Psoas muscle (tissue), 8 donors: ENCODE measurements at regions of chr17 and their contacts with region 1.

Region 1: DNA sequence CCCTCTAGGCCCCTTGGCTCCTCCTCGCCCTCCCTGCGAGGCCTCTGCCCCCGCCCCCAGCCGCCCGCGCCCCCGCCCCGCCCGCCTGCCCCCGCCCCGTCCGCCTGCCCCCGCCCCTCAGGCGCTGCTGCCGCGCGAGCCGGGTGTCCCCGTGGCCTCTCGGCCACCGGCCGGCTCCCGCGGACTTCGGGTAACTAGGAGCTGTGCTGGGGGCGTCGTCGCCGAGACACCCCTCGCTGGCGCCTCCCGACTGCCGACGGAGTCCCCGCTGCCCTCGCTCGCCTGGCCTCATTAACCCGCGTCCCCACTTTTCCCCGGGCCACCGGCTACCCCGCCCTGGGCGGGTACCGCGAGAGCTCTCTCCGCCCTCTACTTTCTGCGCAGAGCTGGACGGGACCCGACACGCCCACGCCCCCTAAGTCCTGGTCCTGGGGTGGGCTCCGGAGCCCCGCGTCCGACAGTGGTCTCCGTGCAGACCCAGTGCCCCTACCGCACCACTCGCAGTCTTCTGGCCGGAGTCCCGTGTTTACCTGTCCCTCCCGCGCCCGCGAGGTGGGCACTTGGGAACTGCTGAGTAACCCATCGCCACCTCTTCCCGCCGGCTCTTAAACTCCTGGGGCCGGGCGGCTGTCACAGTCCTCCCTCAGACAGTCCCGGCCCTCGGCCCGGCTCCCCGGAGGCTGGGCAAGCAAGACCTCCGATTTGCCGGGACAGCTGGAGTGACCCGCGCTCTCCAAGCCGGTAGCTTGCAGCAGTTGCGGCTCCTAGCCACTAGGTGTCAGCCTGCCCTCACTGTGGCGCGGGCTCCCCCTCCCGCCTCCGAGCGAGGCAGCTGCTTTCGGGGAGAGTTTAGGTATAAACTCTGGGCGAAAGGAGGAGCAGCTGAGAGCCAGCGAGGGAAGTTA is at the start of gene TLCD1:
- DNase-seq: peak; percentile 92 to 95
- ATAC-seq: peak; percentile 70 to 79 (median 75)
- H3K4me3 ChIP-seq: peak within 1 kb of the TSS; percentile 80
- H3K27ac ChIP-seq: peak within 1 kb of the TSS; percentile 59
- H3K4me1 ChIP-seq: peaks cover 32% of the 10 kb centered on the region
- H3K27me3 ChIP-seq: no peaks in the 10 kb centered on the region
- CTCF ChIP-seq: peak; percentile 99
- total RNA-seq, gene TLCD1: 0.77 to 1.9 (median 0.88) TPM in 3 of 4 donors, not detected in the other

Region 2: DNA sequence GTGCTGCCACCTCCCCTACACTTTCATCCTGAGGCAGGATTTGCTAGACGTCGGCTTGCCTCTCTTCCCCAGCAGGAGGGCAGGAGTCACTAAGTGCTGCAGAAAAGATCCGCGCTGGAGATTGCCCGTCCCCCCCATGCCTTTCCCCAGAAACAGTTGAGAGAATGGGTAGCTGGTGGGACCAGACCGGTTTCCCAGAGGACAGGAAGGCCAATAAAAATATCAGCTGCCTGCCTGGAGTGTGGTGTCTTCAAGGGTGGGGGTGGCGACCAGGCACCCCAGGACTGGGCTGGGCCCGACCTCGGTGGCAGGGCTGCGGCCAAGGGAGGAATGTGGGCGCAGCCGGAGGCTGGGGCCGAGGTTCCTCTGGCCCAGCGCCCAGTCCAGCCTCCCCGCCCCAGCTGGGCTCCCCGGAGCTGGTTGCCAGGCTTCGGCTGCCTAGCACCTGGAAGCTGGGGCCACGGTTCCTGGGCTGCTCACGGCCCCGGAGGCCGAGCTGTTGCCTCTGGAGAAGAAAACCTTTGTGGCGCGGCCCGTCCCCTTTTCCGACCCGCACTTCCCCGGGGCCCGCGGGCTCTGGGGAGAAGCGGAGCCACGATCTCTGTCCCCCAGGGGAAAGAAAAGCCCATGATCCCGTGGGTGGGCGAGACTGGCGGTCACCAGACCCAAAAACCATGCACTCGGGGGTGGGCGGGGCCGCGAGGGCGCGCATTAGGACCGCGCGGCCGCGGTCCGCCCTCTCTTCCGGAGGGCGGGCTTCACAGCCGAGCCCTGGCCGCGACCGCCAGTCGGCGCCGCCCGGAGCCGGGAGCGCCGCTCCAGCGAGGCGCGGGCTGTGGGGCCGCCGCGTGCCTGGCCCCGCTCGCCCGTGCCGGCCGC is 17.0 kb after region 1 on chr17 and contains the start of gene TRAF4:
- intact Hi-C with region 1: loop called in 1 of 2 experiments (anchors 2 kb)
- DNase-seq: peak; percentile 82 to 84
- ATAC-seq: peak; percentile 86 to 91 (median 88)
- H3K4me3 ChIP-seq: peak within 1 kb of the TSS; percentile 79
- H3K27ac ChIP-seq: peak within 1 kb of the TSS; percentile 78
- H3K4me1 ChIP-seq: peaks cover 28% of the 10 kb centered on the region
- H3K27me3 ChIP-seq: no peaks in the 10 kb centered on the region
- CTCF ChIP-seq: peak; percentile 31
- total RNA-seq, gene TRAF4: 1.4 to 6.7 (median 2.3) TPM

Region 3: GRCh38 chr17:28750178-28751047 is 23.9 kb after region 1 on chr17:
- intact Hi-C with region 1: loop called (anchors 1 to 2 kb)
- DNase-seq: peak; percentile 92 to 95
- ATAC-seq: peak; percentile 83 to 91 (median 88)
- H3K4me3 ChIP-seq: no peak overlapping the region
- H3K27ac ChIP-seq: no peak overlapping the region
- H3K4me1 ChIP-seq: peaks cover 12% of the 10 kb centered on the region
- H3K27me3 ChIP-seq: no peaks in the 10 kb centered on the region
- CTCF ChIP-seq: peak; percentile 100

Region 4: DNA sequence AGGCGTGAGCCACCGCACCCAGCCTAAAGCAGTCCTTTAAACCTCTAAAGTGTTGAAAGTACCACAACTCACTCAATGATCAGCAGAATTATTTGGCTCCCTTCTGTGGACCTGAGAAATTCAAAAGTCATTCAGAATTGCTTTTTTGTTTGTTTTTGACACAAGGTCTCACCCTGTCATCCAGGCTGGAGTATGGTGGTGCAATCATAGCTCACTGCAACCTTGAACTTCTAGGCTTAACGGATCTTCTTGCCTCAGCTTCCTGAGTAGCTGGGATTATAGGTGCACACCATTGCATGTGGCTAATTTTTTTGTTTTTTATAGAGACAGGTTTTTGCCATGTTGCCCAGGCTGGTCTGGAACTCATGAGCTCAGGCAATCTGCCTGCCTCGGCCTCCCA is 61.6 kb after region 1 on chr17:
- intact Hi-C with region 1: no loop called
- DNase-seq: no peak
- ATAC-seq: no peak
- H3K4me3 ChIP-seq: no peak overlapping the region
- H3K27ac ChIP-seq: no peak overlapping the region
- H3K4me1 ChIP-seq: no peaks in the 10 kb centered on the region
- H3K27me3 ChIP-seq: no peaks in the 10 kb centered on the region
- CTCF ChIP-seq: no peak

Region 5: GRCh38 chr17:28902819-28903545 is 176.5 kb after region 1 on chr17 and contains the start of gene DHRS13:
- intact Hi-C with region 1: loop called in 1 of 2 experiments (anchors 5 kb)
- DNase-seq: peak; percentile 89 to 94
- ATAC-seq: peak; percentile 89 to 93 (median 91)
- H3K4me3 ChIP-seq: peak within 1 kb of the TSS; percentile 78
- H3K27ac ChIP-seq: peak within 1 kb of the TSS; percentile 72
- H3K4me1 ChIP-seq: peaks cover 18% of the 10 kb centered on the region
- H3K27me3 ChIP-seq: no peaks in the 10 kb centered on the region
- CTCF ChIP-seq: peak; percentile 77
- total RNA-seq, gene DHRS13: 0.48 to 2.1 (median 1.1) TPM

Region 6: DNA sequence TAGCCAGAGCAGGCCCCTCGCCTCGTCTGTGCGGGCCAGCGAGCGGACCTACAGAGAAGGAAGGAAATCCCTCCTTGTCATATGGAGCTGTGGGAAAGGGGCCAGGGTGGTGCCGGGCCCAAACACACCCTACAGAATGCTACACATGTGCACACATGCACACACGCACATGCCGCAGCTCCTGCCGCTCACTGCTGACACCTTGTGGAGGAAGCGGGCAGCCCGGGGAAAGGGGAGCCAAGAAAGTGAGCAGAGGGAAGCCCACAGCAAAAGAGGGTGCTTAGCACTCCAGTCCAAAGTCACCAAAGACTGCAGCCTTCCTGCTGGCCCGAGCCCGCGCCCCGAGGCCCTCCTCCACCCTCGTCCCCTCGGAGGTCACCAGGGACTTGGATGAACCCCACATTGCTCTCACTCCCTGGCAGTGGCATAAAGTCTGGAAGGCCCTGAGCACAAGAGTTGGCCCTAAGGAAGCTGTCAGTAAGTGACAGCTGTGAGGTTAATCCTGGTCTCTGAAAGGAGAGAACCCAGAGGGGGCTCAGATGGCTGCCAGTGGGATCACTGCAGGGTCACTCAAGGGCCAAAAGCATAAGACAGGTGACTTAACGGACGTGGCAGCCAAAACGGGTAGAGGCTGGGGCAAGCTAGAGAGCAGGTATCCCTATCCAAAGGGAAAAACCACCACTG is 385.5 kb after region 1 on chr17:
- intact Hi-C with region 1: loop called (anchors 10 kb)
- DNase-seq: peak; percentile 77 to 87
- ATAC-seq: peak; percentile 70 to 78 (median 74)
- H3K4me3 ChIP-seq: no peak overlapping the region
- H3K27ac ChIP-seq: peak overlapping the region; percentile 78
- H3K4me1 ChIP-seq: peaks cover 78% of the 10 kb centered on the region
- H3K27me3 ChIP-seq: no peaks in the 10 kb centered on the region
- CTCF ChIP-seq: peak; percentile 90